GM12878 (cell line): ENCODE measurements at regions of chr7 and their contacts with region 1.

Region 1: GRCh38 chr7:44973610-44974401 is 5.0 kb downstream of the MYO1G start:
- DNase-seq: no peak
- ATAC-seq: peak; percentile 56
- H3K4me3 ChIP-seq: no peak overlapping the region
- H3K27ac ChIP-seq: no peak overlapping the region
- H3K4me1 ChIP-seq: peaks cover 24% of the 10 kb centered on the region
- H3K27me3 ChIP-seq: no peaks in the 10 kb centered on the region
- CTCF ChIP-seq: peak; percentile 56 to 77 (median 62)
- EP300 ChIP-seq: no peak
- POLR2A ChIP-seq: no peak
- RAD21 ChIP-seq: peak; percentile 58

Region 2: DNA sequence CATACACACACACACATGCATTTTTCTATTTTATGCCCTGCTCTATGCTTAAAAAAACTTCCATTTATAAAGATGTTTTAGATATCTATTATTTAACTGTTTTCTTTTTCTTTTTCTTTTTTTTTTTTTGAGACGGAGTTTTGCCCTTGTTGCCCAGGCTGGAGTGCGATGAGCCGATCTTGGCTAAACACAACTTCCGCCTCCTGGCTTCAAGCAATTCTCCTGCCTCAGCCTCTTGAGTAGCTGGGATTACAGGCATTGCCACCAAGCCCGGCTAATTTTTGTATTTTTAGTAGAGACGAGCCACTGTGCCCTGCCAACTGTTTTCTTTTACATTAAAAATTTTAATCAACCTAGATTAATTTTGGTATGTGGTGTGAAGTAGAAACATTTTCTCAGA is 42.9 kb before region 1 on chr7:
- CTCF ChIA-PET with region 1: no interaction called
- POLR2A ChIA-PET with region 1: no interaction called
- RAD21 ChIA-PET with region 1: no interaction called
- SMC1A ChIA-PET with region 1: no interaction called
- in situ Hi-C with region 1: no loop called
- intact Hi-C with region 1: no loop called
- DNase-seq: no peak
- ATAC-seq: no peak
- H3K4me3 ChIP-seq: no peak overlapping the region
- H3K27ac ChIP-seq: no peak overlapping the region
- H3K4me1 ChIP-seq: no peaks in the 10 kb centered on the region
- H3K27me3 ChIP-seq: no peaks in the 10 kb centered on the region
- CTCF ChIP-seq: no peak
- EP300 ChIP-seq: no peak
- POLR2A ChIP-seq: no peak
- RAD21 ChIP-seq: no peak

Region 3: DNA sequence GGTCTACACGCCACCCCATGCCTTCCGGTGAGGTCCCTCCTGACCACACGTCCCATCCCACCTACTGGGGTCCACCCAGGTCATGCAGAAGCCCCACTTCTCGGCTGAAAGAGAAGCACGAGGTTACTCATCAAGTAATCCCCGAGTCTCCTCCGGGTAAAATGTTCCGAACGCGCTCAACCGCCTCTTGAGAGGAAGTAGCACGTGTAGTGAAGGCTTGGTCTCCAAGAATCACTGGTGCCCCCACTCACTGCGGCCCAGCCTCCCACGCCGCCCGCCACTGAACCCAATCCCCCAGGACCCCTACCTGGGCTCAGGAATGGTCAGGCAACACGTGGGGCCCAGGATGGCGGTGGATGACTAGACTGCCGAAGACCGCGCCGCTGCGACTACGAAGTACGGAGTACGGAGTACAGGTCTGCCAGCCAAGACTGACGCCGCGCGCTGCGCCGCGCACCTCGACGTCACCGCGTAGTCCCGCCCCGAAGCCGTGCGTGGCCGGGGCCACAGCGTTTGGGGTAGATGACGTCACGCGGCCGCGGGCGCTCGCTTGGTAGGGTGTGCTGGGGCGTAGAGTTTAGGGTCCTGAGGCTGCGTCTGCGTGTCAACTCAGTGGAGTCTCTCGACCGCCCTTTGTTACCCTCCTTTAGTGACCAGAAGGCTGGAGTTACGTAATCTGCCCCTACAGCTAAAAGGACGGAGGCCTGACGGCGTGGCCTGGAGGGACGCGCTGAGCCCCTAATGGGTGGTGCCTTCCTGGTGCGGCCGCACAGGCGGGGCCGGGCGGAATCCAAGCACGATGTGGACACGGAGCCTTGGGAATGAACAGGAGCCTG is 12.6 kb after region 1 on chr7:
- CTCF ChIA-PET with region 1: interaction called, 48 read pairs
- POLR2A ChIA-PET with region 1: interaction called, 6 read pairs
- RAD21 ChIA-PET with region 1: interaction called, 33 read pairs
- SMC1A ChIA-PET with region 1: interaction called, 24 read pairs
- in situ Hi-C with region 1: no loop called
- intact Hi-C with region 1: no loop called
- DNase-seq: peak; percentile 84
- ATAC-seq: peak; percentile 90
- H3K4me3 ChIP-seq: peak overlapping the region; percentile 93
- H3K27ac ChIP-seq: peak overlapping the region; percentile 86
- H3K4me1 ChIP-seq: peaks cover 22% of the 10 kb centered on the region
- H3K27me3 ChIP-seq: no peaks in the 10 kb centered on the region
- CTCF ChIP-seq: no peak
- EP300 ChIP-seq: peak in 1 of 2 experiments; percentile 47; a peak in 1 of 4 replicates
- POLR2A ChIP-seq: peak; percentile 100
- RAD21 ChIP-seq: no peak

Region 4: GRCh38 chr7:45026984-45027773 is 53.4 kb after region 1 on chr7:
- CTCF ChIA-PET with region 1: interaction called, 23 read pairs
- POLR2A ChIA-PET with region 1: interaction called, 31 read pairs
- RAD21 ChIA-PET with region 1: interaction called, 41 read pairs
- SMC1A ChIA-PET with region 1: interaction called, 25 read pairs
- in situ Hi-C with region 1: no loop called
- intact Hi-C with region 1: loop called (anchors 2 kb)
- DNase-seq: peak; percentile 40
- ATAC-seq: peak; percentile 71
- H3K4me3 ChIP-seq: peak overlapping the region; percentile 58
- H3K27ac ChIP-seq: peak overlapping the region; percentile 98
- H3K4me1 ChIP-seq: peaks cover 33% of the 10 kb centered on the region
- H3K27me3 ChIP-seq: no peaks in the 10 kb centered on the region
- CTCF ChIP-seq: no peak
- EP300 ChIP-seq: no peak
- POLR2A ChIP-seq: no peak
- RAD21 ChIP-seq: no peak

Region 5: DNA sequence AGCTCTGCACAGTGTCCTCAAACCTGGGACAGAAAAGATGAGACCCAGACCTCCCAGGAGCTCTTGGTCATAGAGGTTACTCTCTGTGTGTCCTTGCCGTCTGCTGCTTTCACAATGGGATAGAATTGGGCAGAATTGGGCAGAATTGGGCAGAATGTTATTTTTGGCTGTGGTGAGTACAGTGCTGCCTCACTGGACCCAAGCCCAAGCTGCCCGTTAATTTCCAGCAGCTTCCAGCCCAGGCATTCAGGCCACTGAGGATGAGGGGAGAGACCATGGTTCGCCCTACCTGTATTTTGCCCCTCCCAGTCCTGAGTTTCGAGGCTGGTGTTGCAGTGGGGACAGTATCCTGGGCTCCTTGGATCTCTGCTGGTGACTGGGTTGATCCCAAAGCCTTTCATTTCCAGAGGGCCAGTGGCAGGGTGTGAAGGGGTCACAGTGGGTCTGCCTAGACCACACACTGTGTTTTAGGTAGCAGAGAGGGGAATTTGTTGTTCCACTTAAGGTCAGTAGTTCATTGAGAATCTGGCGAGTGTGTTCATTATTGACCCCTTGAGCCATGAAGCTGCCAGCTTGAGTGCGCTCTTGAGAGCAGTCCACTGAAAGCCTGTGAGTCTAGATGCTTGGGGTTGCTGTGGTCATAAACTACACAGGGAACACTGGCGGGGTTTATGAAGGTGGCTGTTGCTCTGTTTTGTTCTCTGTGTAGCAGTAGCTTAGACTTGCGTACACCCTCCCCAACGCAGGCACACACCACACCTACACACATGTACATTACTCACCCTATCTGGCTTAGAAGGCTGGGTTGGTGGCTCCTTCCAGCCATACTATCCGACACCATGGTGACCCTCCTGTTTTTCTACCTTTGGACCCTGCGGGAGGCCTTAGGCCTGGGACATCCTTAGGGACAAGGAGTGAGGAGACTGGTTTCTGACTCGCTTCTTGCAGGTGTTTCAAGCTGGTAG is 91.5 kb after region 1 on chr7:
- CTCF ChIA-PET with region 1: interaction called, 14 read pairs
- POLR2A ChIA-PET with region 1: interaction called, 3 read pairs
- RAD21 ChIA-PET with region 1: interaction called, 4 read pairs
- SMC1A ChIA-PET with region 1: interaction called, 6 read pairs
- in situ Hi-C with region 1: no loop called
- intact Hi-C with region 1: no loop called
- DNase-seq: no peak
- ATAC-seq: no peak
- H3K4me3 ChIP-seq: no peak overlapping the region
- H3K27ac ChIP-seq: no peak overlapping the region
- H3K4me1 ChIP-seq: 0 out of 2 replicates have a peak, but pooled peaks cover 8% of the 10 kb centered on the region
- H3K27me3 ChIP-seq: no peaks in the 10 kb centered on the region
- CTCF ChIP-seq: no peak
- EP300 ChIP-seq: no peak
- POLR2A ChIP-seq: no peak
- RAD21 ChIP-seq: no peak